Heart right ventricle (tissue), 16 donors: ENCODE measurements at regions of chr13 and their contacts with region 1.

Region 1: DNA sequence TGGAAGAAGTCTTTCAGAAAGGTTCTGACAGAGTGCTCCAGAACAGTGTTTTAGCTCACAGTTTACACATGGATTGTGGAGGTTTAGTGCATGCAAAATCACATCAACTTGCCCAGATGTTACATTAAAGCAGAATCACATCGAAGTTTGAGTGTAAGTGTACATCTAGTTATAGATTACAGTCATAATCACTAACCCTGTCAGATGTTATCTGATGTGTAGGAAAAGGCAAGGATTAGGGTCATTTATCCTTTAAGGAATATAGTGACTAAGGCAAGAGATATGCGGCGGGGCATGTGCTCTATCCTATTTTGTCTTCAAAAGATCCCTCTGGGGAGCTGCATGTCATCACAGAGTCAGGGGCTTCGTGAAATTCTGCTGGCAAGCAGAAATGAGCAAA is 66.9 kb downstream of the CYSLTR2 start:
- DNase-seq: no peak
- ATAC-seq: no peak
- H3K4me3 ChIP-seq: no peak overlapping the region
- H3K27ac ChIP-seq: peak overlapping the region in 2 of 10 donors; percentile 13 to 36
- H3K4me1 ChIP-seq: no peaks in the 10 kb centered on the region
- H3K27me3 ChIP-seq: no peaks in the 10 kb centered on the region
- CTCF ChIP-seq: no peak

Region 2: GRCh38 chr13:48380581-48380980 is 340.0 kb before region 1 on chr13:
- intact Hi-C with region 1: no loop called
- DNase-seq: no peak
- ATAC-seq: no peak
- H3K4me3 ChIP-seq: no peak overlapping the region
- H3K27ac ChIP-seq: peak overlapping the region in 1 of 10 donors; percentile 9
- H3K4me1 ChIP-seq: peaks cover 0 to 7% (median 0%) of the 10 kb centered on the region in 9 donors
- H3K27me3 ChIP-seq: no peaks in the 10 kb centered on the region
- CTCF ChIP-seq: no peak

Region 3: GRCh38 chr13:48660361-48661076 is 60.1 kb before region 1 on chr13:
- intact Hi-C with region 1: loop called in 1 of 10 experiments (anchors 5 kb)
- DNase-seq: peak in 1 of 2 donors; percentile 40
- ATAC-seq: peak; percentile 73 to 91 (median 86)
- H3K4me3 ChIP-seq: no peak overlapping the region
- H3K27ac ChIP-seq: peak overlapping the region; percentile 14 to 83 (median 57)
- H3K4me1 ChIP-seq: peaks cover 0 to 55% (median 16%) of the 10 kb centered on the region in 9 donors
- H3K27me3 ChIP-seq: no peaks in the 10 kb centered on the region
- CTCF ChIP-seq: no peak

Region 4: GRCh38 chr13:48679911-48680680 is 40.5 kb before region 1 on chr13:
- intact Hi-C with region 1: no loop called
- DNase-seq: no peak
- ATAC-seq: peak in 3 of 8 donors; percentile 36 to 70 (median 50)
- H3K4me3 ChIP-seq: peak overlapping the region in 1 of 10 donors; percentile 5
- H3K27ac ChIP-seq: peak overlapping the region in 6 of 10 donors; percentile 14 to 50 (median 26)
- H3K4me1 ChIP-seq: peaks cover 0 to 42% (median 0%) of the 10 kb centered on the region in 9 donors
- H3K27me3 ChIP-seq: no peaks in the 10 kb centered on the region
- CTCF ChIP-seq: no peak